ENCODE measurements at regions of chr1 and their contacts with region 1.

Region 1: DNA sequence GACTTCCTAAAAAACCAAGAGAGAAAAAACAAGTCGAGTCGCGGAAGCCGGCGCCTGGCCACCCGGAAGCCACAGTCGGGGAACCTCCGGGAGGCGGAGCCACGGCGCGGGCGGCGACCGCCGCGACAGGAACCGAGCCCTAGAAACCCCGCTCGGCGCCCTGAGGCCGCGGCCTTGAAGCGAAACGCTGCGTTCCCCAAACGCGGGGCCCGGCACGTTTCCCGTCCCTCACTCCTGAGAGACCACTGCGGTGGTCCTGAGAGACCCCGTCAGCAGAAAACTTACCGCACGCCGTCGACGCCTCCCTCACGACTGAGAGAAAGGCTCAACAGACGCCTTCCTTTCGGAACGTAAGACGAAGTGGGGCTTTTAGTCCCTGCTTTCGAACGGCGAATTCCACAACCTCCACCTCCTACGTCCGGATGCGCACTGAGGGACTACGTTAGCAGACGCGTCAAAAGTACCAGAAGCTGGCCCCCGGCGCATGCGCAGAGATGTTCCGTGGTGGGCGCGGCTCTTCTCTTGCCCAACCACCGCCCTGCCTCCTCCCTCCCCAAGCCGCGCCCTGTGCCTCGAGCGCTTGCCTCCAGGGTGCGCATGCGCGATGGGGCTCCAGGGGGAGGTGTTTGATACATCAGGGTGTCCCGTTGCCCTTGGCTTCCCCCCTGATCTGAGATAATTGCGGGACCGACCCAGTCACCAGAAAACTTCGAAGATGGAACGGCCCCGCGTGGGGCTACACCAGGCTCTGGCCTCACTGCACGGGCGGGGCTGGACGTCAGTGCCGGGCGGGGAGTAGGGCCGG is at the start of gene RSRP1:
- DNase-seq: peak; percentile 100
- ATAC-seq: peak; percentile 94 to 98 (median 96)
- H3K4me3 ChIP-seq: peak within 1 kb of the TSS; percentile 76 to 96 (median 85)
- H3K27ac ChIP-seq: peak within 1 kb of the TSS; percentile 97 to 100 (median 99)
- H3K4me1 ChIP-seq: peaks cover 2 to 45% (median 34%) of the 10 kb centered on the region in 9 donors
- H3K27me3 ChIP-seq: no peaks in the 10 kb centered on the region
- CTCF ChIP-seq: peak in 1 of 9 donors; percentile 17
- total RNA-seq, gene RSRP1: 21.1 to 47.3 (median 27.7) TPM

Region 2: GRCh38 chr1:25099343-25099951 is 147.8 kb before region 1 on chr1:
- intact Hi-C with region 1: no loop called
- DNase-seq: no peak
- ATAC-seq: no peak
- H3K4me3 ChIP-seq: no peak overlapping the region
- H3K27ac ChIP-seq: peak overlapping the region in 1 of 10 donors; percentile 40
- H3K4me1 ChIP-seq: peaks cover 0 to 24% (median 0%) of the 10 kb centered on the region in 9 donors
- H3K27me3 ChIP-seq: peaks cover 0 to 28% (median 4%) of the 10 kb centered on the region in 7 donors
- CTCF ChIP-seq: no peak

Region 3: GRCh38 chr1:25338188-25338981 is 91.2 kb after region 1 on chr1 and contains the start of gene TMEM50A:
- intact Hi-C with region 1: loop called in 3 of 10 experiments (anchors 5 kb)
- DNase-seq: peak; percentile 92
- ATAC-seq: peak; percentile 97 to 99 (median 98)
- H3K4me3 ChIP-seq: peak within 1 kb of the TSS; percentile 71 to 98 (median 90)
- H3K27ac ChIP-seq: peak within 1 kb of the TSS; percentile 87 to 99 (median 97)
- H3K4me1 ChIP-seq: peaks cover 3 to 46% (median 26%) of the 10 kb centered on the region in 9 donors
- H3K27me3 ChIP-seq: no peaks in the 10 kb centered on the region
- CTCF ChIP-seq: no peak
- total RNA-seq, gene TMEM50A: 69.2 to 128 (median 88.8) TPM